ENCODE measurements at regions of chr1 and their contacts with region 1.

Region 1: DNA sequence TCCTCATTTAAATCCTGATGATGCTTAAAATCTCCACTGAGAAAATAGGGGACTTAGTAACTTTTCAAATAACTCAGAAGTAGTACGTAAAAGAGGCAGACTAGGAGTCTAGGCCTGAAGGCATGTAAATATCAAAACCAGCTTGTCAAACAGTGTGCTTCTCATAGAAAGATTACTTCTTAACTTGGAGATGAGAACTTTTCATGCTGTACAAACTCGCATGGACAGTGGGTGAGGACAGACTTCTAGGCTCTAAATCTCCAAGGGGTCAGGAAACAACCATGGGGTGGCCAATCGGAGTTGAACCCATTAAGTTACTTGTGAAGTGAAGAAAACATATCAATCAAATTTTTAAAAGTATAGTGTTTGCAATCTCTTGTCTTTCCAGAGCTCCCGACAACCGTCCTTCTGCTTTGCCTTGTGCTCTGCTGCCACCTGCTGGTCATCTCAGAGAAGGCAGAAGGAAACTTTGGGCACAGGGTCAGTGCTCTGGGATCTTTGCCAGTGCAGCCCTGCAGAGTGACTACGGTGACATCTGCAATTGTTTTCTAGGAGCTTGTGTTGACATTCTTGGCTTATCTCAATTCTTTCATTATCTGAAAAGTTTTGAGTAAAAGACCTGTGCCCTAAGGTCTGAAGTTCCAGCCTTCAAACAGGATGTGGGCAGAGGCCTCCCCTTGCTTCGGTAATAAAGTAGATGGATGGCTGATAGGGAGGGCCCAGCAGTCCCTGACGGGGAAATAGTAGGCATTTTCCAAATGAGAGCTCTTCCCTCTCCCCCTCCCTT is 105.1 kb upstream of the PDE4B start:
- DNase-seq: peak in 1 of 2 donors; percentile 88
- H3K4me3 ChIP-seq: no peak overlapping the region
- H3K27ac ChIP-seq: no peak overlapping the region
- H3K4me1 ChIP-seq: peaks cover 0 to 18% of the 10 kb centered on the region in 2 donors
- H3K27me3 ChIP-seq: no peaks in the 10 kb centered on the region
- CTCF ChIP-seq: peak; percentile 84 to 94 (median 93)

Region 2: GRCh38 chr1:65214340-65215027 is 473.1 kb before region 1 on chr1:
- intact Hi-C with region 1: loop called (anchors 5 kb)
- DNase-seq: no peak
- H3K4me3 ChIP-seq: no peak overlapping the region
- H3K27ac ChIP-seq: no peak overlapping the region
- H3K4me1 ChIP-seq: no peaks in the 10 kb centered on the region
- H3K27me3 ChIP-seq: no peaks in the 10 kb centered on the region
- CTCF ChIP-seq: no peak

Region 3: GRCh38 chr1:65431111-65431705 is 256.4 kb before region 1 on chr1:
- intact Hi-C with region 1: loop called (anchors 5 kb)
- DNase-seq: no peak
- H3K4me3 ChIP-seq: no peak overlapping the region
- H3K27ac ChIP-seq: peak overlapping the region; percentile 59 to 65
- H3K4me1 ChIP-seq: peaks cover 0 to 19% of the 10 kb centered on the region in 2 donors
- H3K27me3 ChIP-seq: no peaks in the 10 kb centered on the region
- CTCF ChIP-seq: peak in 2 of 3 experiments; percentile 34 to 52